ENCODE measurements at regions of chr1 and their contacts with region 1.

Region 1: GRCh38 chr1:113811888-113812660 is at the start of gene RSBN1:
- DNase-seq: peak; percentile 96 to 99 (median 98)
- ATAC-seq: peak; percentile 91
- H3K4me3 ChIP-seq: peak within 1 kb of the TSS; percentile 89 to 98
- H3K4me3 Mint-ChIP-seq: peak within 1 kb of the TSS; percentile 93
- H3K27ac ChIP-seq: peak within 1 kb of the TSS; percentile 90 to 94
- H3K27ac Mint-ChIP-seq: peak within 1 kb of the TSS; percentile 98
- H3K4me1 ChIP-seq: peaks cover 24% of the 10 kb centered on the region
- H3K4me1 Mint-ChIP-seq: peaks cover 37% of the 10 kb centered on the region
- H3K27me3 ChIP-seq: no peaks in the 10 kb centered on the region
- H3K27me3 Mint-ChIP-seq: no peaks in the 10 kb centered on the region
- CTCF ChIP-seq: no peak
- total RNA-seq, gene RSBN1: 36.8 to 37.6 TPM

Region 2: DNA sequence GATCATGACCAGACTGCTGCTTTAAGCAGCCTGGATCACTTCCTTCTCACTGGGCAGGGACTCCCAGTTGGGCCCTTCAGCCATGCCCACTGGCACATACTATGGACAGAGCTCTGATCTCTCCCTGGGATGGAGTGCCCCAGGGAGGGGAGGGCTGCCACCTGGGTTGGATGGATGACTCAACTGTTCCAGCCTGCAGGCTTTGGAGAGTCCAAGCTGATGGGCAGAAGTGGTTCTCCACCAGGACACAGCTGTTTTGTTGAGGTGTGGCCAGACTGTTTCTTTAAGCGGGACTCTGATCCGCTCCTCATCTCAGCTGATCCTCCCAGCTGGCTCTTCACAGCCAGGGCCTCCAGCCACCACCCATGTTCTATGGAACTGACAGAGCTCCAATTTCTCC is 254.9 kb before region 1 on chr1:
- CTCF ChIA-PET with region 1: no interaction called
- POLR2A ChIA-PET with region 1: no interaction called
- intact Hi-C with region 1: no loop called
- DNase-seq: no peak
- ATAC-seq: no peak
- H3K4me3 ChIP-seq: no peak overlapping the region
- H3K4me3 Mint-ChIP-seq: no peak overlapping the region
- H3K27ac ChIP-seq: no peak overlapping the region
- H3K27ac Mint-ChIP-seq: no peak overlapping the region
- H3K4me1 ChIP-seq: no peaks in the 10 kb centered on the region
- H3K4me1 Mint-ChIP-seq: no peaks in the 10 kb centered on the region
- H3K27me3 ChIP-seq: no peaks in the 10 kb centered on the region
- H3K27me3 Mint-ChIP-seq: peaks cover 3% of the 10 kb centered on the region
- CTCF ChIP-seq: no peak

Region 3: GRCh38 chr1:113759333-113760101 is 52.6 kb before region 1 on chr1 and contains the start of gene PHTF1:
- CTCF ChIA-PET with region 1: interaction called, 6 read pairs
- POLR2A ChIA-PET with region 1: interaction called, 19 read pairs
- intact Hi-C with region 1: loop called (anchors 1 kb)
- DNase-seq: peak; percentile 3 to 77 (median 59)
- ATAC-seq: peak; percentile 73
- H3K4me3 ChIP-seq: peak within 1 kb of the TSS; percentile 84 to 94
- H3K4me3 Mint-ChIP-seq: peak within 1 kb of the TSS; percentile 90
- H3K27ac ChIP-seq: peak within 1 kb of the TSS; percentile 73 to 89
- H3K27ac Mint-ChIP-seq: peak within 1 kb of the TSS; percentile 96
- H3K4me1 ChIP-seq: peaks cover 4% of the 10 kb centered on the region
- H3K4me1 Mint-ChIP-seq: peaks cover 25% of the 10 kb centered on the region
- H3K27me3 ChIP-seq: no peaks in the 10 kb centered on the region
- H3K27me3 Mint-ChIP-seq: no peaks in the 10 kb centered on the region
- CTCF ChIP-seq: no peak
- total RNA-seq, gene PHTF1: 4.4 to 5.4 TPM

Region 4: GRCh38 chr1:113835642-113836307 is 23.7 kb after region 1 on chr1:
- CTCF ChIA-PET with region 1: interaction called, 4 read pairs
- POLR2A ChIA-PET with region 1: interaction called, 3 read pairs
- intact Hi-C with region 1: loop called in 1 of 2 experiments (anchors 2 kb)
- DNase-seq: peak in 4 of 9 experiments; percentile 17 to 77 (median 54)
- ATAC-seq: no peak
- H3K4me3 ChIP-seq: no peak overlapping the region
- H3K4me3 Mint-ChIP-seq: no peak overlapping the region
- H3K27ac ChIP-seq: no peak overlapping the region
- H3K27ac Mint-ChIP-seq: no peak overlapping the region
- H3K4me1 ChIP-seq: no peaks in the 10 kb centered on the region
- H3K4me1 Mint-ChIP-seq: peaks cover 7% of the 10 kb centered on the region
- H3K27me3 ChIP-seq: no peaks in the 10 kb centered on the region
- H3K27me3 Mint-ChIP-seq: no peaks in the 10 kb centered on the region
- CTCF ChIP-seq: peak; percentile 86

Region 5: DNA sequence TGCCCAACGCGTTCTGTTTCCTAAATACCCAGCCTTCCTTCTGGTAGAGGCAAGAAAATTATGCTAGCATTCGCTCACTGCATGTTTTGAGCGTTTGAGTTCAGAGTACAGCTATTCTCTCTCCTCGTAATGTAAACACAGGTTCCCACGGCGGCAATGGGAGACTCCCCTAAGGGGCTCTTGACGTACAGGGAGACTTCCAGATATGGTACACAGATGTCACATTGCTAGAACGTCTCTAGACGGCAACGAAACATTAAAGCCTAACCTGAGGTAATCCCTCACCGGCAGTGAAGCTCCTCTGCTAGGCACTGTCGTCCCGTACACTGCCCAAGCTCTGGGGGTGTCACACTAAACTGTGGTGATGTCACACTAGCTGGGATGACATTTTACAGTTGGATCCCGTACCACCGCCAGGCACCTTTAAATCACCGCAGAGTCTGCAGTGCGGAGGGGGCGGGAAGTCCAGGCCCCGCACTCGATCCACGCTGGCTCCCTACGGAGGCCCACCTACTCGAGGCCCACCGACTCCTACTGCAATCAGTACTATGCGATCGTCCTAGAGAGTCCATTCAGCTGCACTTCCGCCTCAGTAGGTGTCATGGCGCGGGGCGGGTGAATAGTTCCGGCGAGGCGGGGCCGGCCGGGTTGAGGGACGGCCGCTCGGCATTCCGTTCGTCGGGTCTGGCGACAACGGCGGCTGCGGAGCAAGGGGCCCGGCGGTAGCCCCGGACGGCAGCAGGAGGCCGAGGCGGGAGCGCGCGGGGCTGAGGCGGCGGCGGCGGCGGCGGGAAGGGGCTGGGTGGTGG is 117.1 kb after region 1 on chr1 and contains the start of gene HIPK1:
- CTCF ChIA-PET with region 1: interaction called, 3 read pairs
- POLR2A ChIA-PET with region 1: interaction called, 6 read pairs
- intact Hi-C with region 1: loop called in 1 of 2 experiments (anchors 1 kb)
- DNase-seq: peak; percentile 86 to 96 (median 93)
- ATAC-seq: peak; percentile 65
- H3K4me3 ChIP-seq: peak within 1 kb of the TSS; percentile 89 to 93
- H3K4me3 Mint-ChIP-seq: peak within 1 kb of the TSS; percentile 99
- H3K27ac ChIP-seq: peak within 1 kb of the TSS; percentile 97 to 99
- H3K27ac Mint-ChIP-seq: peak within 1 kb of the TSS; percentile 100
- H3K4me1 ChIP-seq: peaks cover 37% of the 10 kb centered on the region
- H3K4me1 Mint-ChIP-seq: peaks cover 52% of the 10 kb centered on the region
- H3K27me3 ChIP-seq: no peaks in the 10 kb centered on the region
- H3K27me3 Mint-ChIP-seq: no peaks in the 10 kb centered on the region
- CTCF ChIP-seq: no peak
- total RNA-seq, gene HIPK1: 301 to 312 TPM

Region 6: DNA sequence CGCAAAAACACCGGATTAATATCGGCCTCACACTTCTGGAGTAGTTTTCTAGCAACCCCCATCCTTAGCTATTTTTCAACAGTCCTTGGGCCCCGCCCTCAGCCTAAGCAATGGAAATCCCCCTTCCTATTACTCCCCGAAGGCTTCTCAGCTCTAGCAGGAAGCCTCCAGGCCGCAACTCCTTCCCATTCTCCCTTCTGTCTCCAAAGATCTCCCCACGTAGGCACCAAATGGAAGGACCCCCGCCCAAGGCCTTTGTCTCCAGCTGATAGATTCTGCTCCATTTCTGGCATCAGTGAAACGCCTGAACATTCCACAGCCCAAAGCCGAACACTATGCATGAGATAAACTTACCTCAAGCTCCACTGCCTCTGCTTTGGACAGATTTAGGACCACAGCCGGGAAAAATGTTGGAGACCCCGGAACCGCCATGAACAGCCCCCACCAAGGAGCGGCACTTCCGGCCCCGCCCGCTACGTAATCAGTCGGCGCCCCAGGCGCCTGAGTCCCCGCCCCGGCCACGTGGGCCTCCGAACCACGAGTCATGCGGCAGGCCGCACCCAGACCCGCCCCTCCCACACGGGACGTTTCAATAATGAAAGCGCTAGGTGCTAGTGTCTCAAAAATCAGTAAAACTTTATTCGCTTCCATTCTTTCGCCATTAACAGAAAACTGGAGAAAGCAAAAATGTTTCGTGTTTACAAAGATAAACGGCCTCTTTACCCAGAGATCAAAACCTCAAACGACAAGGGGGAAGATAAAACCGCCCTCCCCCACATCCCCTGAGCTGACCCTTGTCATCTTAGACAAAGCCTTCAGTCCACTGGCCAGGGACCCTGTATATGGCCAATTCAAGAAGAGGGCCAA is 904.5 kb after region 1 on chr1 and contains the start of gene NRAS:
- CTCF ChIA-PET with region 1: no interaction called
- POLR2A ChIA-PET with region 1: no interaction called
- intact Hi-C with region 1: loop called (anchors 1 to 5 kb)
- DNase-seq: peak; percentile 91 to 97 (median 97)
- ATAC-seq: peak; percentile 94
- H3K4me3 ChIP-seq: peak within 1 kb of the TSS; percentile 84 to 87
- H3K4me3 Mint-ChIP-seq: peak within 1 kb of the TSS; percentile 97
- H3K27ac ChIP-seq: peak within 1 kb of the TSS; percentile 94 to 99
- H3K27ac Mint-ChIP-seq: peak within 1 kb of the TSS; percentile 100
- H3K4me1 ChIP-seq: peaks cover 16% of the 10 kb centered on the region
- H3K4me1 Mint-ChIP-seq: peaks cover 34% of the 10 kb centered on the region
- H3K27me3 ChIP-seq: no peaks in the 10 kb centered on the region
- H3K27me3 Mint-ChIP-seq: no peaks in the 10 kb centered on the region
- CTCF ChIP-seq: no peak
- total RNA-seq, gene NRAS: 46.0 to 46.4 TPM

Region 7: GRCh38 chr1:115098979-115099692 is 1287.1 kb after region 1 on chr1:
- CTCF ChIA-PET with region 1: no interaction called
- POLR2A ChIA-PET with region 1: no interaction called
- intact Hi-C with region 1: loop called in 1 of 2 experiments (anchors 1 kb)
- DNase-seq: peak; percentile 55 to 96 (median 74)
- ATAC-seq: peak; percentile 89
- H3K4me3 ChIP-seq: peak overlapping the region; percentile 51 to 56
- H3K4me3 Mint-ChIP-seq: peak overlapping the region; percentile 86
- H3K27ac ChIP-seq: peak overlapping the region; percentile 95
- H3K27ac Mint-ChIP-seq: peak overlapping the region; percentile 97
- H3K4me1 ChIP-seq: peaks cover 27% of the 10 kb centered on the region
- H3K4me1 Mint-ChIP-seq: peaks cover 36% of the 10 kb centered on the region
- H3K27me3 ChIP-seq: no peaks in the 10 kb centered on the region
- H3K27me3 Mint-ChIP-seq: no peaks in the 10 kb centered on the region
- CTCF ChIP-seq: no peak